ENCODE measurements at regions of chr1 and their contacts with region 1.

Region 1: DNA sequence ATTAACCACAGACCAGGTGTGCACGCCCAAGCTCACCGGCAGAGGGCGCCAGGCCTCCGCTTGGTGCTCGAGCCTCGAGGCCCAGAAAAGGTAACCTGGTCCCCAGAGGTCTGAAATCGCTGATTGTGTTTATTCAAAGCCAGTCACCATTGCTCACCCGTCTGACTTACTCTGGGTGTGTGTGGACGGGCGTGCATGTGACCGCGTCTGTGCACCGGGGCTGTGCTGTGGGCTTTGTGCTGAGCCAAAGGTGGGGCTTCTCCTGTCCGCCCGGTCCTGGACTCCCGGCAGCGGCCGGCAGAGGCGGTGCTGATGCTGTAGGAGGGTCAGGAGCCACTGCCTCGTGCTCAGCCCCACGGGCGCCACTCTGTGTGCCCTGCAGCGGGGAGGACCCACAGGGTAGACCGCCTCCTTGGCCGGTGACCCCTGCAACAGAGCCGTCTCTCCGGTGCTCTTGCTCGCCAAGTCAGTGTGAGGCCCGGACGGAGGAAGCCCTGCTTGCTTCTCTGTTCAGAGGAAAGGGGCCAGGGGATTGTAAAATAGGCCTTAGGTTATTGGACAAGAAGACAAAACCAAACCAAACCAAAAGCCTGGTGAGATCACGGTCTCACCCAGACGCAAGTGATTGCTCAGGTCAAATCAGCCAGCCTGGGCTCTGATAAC is 32.0 kb upstream of the BTG2 start:
- DNase-seq: peak; percentile 86 to 94 (median 88)
- ATAC-seq: peak; percentile 50 to 76 (median 62)
- H3K4me3 ChIP-seq: peak overlapping the region in 10 of 12 donors; percentile 29 to 54 (median 40)
- H3K27ac ChIP-seq: peak overlapping the region; percentile 8 to 98 (median 89)
- H3K4me1 ChIP-seq: peaks cover 7 to 81% (median 57%) of the 10 kb centered on the region in 12 donors
- H3K27me3 ChIP-seq: no peaks in the 10 kb centered on the region
- CTCF ChIP-seq: peak; percentile 95 to 100 (median 98)
- POLR2A ChIP-seq: peak in 1 of 2 donors; percentile 34

Region 2: DNA sequence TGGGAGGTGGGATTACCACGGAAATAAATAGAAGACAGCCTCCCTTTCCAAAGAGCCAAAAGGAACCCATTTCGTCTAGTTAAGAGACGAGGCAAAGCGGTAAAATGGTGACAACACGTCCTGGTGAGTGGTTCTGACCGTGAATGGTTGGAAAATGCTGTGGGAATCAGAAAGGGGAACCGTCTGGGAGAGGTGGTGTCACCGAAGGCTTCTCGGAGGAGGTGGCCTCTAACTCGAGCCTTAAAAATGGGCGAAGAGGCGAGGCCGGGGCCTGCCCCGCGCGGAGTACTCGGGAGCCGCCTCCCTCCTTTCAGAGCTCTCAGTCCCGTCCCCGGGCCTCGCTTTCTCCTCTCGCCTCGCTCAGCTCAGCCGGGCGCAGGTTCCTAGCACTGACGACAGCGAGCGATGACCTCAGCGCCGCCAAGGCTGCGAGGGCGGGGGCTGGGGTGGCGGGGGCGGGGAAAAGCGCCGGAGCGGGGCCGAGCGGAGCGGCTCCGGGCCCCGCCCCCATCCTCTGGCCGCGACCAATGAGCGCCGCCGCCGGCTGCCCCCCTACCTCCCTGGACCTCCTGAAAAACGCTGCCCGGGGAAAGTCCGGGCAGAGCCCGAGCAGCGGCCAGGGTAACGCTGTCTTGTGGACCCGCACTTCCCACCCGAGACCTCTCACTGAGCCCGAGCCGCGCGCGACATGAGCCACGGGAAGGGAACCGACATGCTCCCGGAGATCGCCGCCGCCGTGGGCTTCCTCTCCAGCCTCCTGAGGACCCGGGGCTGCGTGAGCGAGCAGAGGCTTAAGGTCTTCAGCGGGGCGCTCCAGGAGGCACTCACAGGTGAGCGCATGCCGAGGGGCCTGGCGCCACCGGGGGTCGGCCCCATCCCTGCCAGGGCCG is 31.8 kb after region 1 on chr1 and contains the start of gene BTG2:
- intact Hi-C with region 1: loop called in 7 of 10 experiments (anchors 1 to 5 kb)
- DNase-seq: peak; percentile 95 to 97 (median 96)
- ATAC-seq: peak; percentile 77 to 93 (median 90)
- H3K4me3 ChIP-seq: peak within 1 kb of the TSS; percentile 58 to 100 (median 91)
- H3K27ac ChIP-seq: peak within 1 kb of the TSS; percentile 92 to 100 (median 98)
- H3K4me1 ChIP-seq: peaks cover 5 to 52% (median 35%) of the 10 kb centered on the region in 12 donors
- H3K27me3 ChIP-seq: no peaks in the 10 kb centered on the region
- CTCF ChIP-seq: no peak
- POLR2A ChIP-seq: peak; percentile 99 to 100
- total RNA-seq, gene BTG2: 28.0 to 174 (median 42.1) TPM

Region 3: DNA sequence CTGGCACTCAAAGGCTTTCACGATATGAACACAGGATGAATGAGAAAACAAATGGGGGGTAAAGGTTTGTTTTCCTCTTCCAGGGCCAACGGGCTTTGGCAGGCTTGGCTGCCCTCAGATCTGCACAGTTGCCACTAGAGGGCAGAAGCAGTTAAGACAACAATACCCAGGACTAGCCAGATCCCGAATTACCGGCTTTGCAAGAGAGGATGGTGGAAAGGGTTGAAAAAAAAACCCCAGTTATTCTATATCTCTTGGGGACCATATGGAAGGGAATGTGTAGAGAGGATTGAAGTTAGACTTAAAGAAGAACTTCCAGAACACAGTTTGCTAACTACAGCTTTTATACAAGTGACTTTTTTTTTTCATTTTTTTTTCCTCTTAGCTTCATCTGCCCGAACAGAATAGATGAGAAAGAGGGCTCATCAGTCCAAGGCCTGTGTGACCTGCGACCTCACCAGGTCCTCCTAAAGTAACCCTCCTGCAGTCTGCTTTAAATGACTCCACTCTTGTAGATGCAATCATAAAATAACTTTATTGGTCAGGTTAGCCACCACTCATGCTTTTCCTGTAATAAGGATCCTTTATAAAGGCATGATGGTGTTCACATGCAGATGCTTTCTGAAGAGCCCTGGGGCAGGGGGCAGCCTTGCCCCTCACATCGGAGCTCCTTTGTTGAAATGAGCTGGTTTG is 66.9 kb after region 1 on chr1:
- intact Hi-C with region 1: loop called (anchors 1 to 2 kb)
- DNase-seq: peak in 4 of 5 donors; percentile 65 to 79 (median 69)
- ATAC-seq: peak; percentile 73 to 86 (median 83)
- H3K4me3 ChIP-seq: no peak overlapping the region
- H3K27ac ChIP-seq: peak overlapping the region in 1 of 12 donors; percentile 8
- H3K4me1 ChIP-seq: peaks cover 0 to 36% (median 10%) of the 10 kb centered on the region in 12 donors
- H3K27me3 ChIP-seq: peaks cover 0 to 16% (median 0%) of the 10 kb centered on the region in 9 donors
- CTCF ChIP-seq: peak in 11 of 12 donors; percentile 73 to 94 (median 90)
- POLR2A ChIP-seq: no peak

Region 4: GRCh38 chr1:203486618-203487370 is 213.5 kb after region 1 on chr1:
- intact Hi-C with region 1: loop called (anchors 2 to 5 kb)
- DNase-seq: peak in 1 of 5 donors; percentile 38
- ATAC-seq: peak in 3 of 4 donors; percentile 3 to 34 (median 23)
- H3K4me3 ChIP-seq: peak overlapping the region in 11 of 12 donors; percentile 10 to 54 (median 45)
- H3K27ac ChIP-seq: peak overlapping the region; percentile 55 to 90 (median 84)
- H3K4me1 ChIP-seq: peaks cover 0 to 46% (median 16%) of the 10 kb centered on the region in 12 donors
- H3K27me3 ChIP-seq: no peaks in the 10 kb centered on the region
- CTCF ChIP-seq: no peak
- POLR2A ChIP-seq: no peak

Region 5: DNA sequence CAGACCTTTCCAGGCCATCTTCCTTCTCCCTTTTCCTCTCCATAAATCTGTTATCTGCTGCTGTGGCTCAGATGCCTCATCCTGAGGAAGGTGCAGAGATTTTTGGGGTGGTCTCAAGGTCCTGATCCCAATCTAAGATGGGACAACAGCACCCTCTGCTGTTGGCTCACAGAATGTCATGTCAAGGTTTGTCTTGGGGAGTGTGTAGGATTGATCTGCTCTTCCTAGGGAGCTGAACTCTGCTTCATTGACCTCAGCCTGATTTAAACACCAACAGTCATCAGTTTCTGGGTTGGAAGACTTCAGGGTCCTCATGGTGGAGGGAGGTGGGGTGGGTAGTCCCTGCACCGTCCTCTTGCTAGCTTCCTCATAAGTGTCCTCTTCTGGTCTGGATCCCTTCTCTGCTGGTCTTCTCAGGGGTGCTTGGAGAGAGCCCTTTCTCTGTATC is 428.8 kb after region 1 on chr1:
- intact Hi-C with region 1: loop called in 2 of 10 experiments (anchors 10 kb)
- DNase-seq: peak in 1 of 5 donors; percentile 40
- ATAC-seq: peak; percentile 36 to 68 (median 62)
- H3K4me3 ChIP-seq: no peak overlapping the region
- H3K27ac ChIP-seq: peak overlapping the region in 1 of 12 donors; percentile 89
- H3K4me1 ChIP-seq: peaks cover 0 to 16% (median 8%) of the 10 kb centered on the region in 12 donors
- H3K27me3 ChIP-seq: no peaks in the 10 kb centered on the region
- CTCF ChIP-seq: peak; percentile 59 to 85 (median 78)
- POLR2A ChIP-seq: no peak